Natural killer cell (primary cell): ENCODE measurements at regions of chr6 and their contacts with region 1.

Region 1: GRCh38 chr6:14210663-14211561 is 93.3 kb downstream of the CD83 start:
- DNase-seq: peak; percentile 94
- ATAC-seq: peak; percentile 93 to 97 (median 93)
- H3K4me3 ChIP-seq: peak overlapping the region; percentile 89
- H3K4me3 Mint-ChIP-seq: peak overlapping the region; percentile 88
- H3K27ac ChIP-seq: peak overlapping the region; percentile 83
- H3K27ac Mint-ChIP-seq: peak overlapping the region; percentile 62 to 86
- H3K4me1 ChIP-seq: peaks cover 22% of the 10 kb centered on the region
- H3K4me1 Mint-ChIP-seq: peaks cover 9 to 18% of the 10 kb centered on the region in 2 donors
- H3K27me3 ChIP-seq: no peaks in the 10 kb centered on the region
- H3K27me3 Mint-ChIP-seq: no peaks in the 10 kb centered on the region
- CTCF ChIP-seq: peak; percentile 53

Region 2: GRCh38 chr6:15389765-15390723 is 1179.1 kb after region 1 on chr6:
- intact Hi-C with region 1: loop called (anchors 5 kb)
- DNase-seq: peak in 1 of 2 donors; percentile 55
- ATAC-seq: peak; percentile 22 to 68 (median 53)
- H3K4me3 ChIP-seq: no peak overlapping the region
- H3K4me3 Mint-ChIP-seq: no peak overlapping the region
- H3K27ac ChIP-seq: no peak overlapping the region
- H3K27ac Mint-ChIP-seq: peak overlapping the region; percentile 47 to 62
- H3K4me1 ChIP-seq: peaks cover 35% of the 10 kb centered on the region
- H3K4me1 Mint-ChIP-seq: peaks cover 82 to 90% of the 10 kb centered on the region in 2 donors
- H3K27me3 ChIP-seq: no peaks in the 10 kb centered on the region
- H3K27me3 Mint-ChIP-seq: no peaks in the 10 kb centered on the region
- CTCF ChIP-seq: peak; percentile 58

Region 3: GRCh38 chr6:15441215-15441868 is 1230.4 kb after region 1 on chr6:
- intact Hi-C with region 1: loop called (anchors 10 kb)
- DNase-seq: peak in 1 of 2 donors; percentile 75
- ATAC-seq: peak; percentile 49 to 72 (median 60)
- H3K4me3 ChIP-seq: no peak overlapping the region
- H3K4me3 Mint-ChIP-seq: no peak overlapping the region
- H3K27ac ChIP-seq: no peak overlapping the region
- H3K27ac Mint-ChIP-seq: peak overlapping the region; percentile 68 to 88
- H3K4me1 ChIP-seq: peaks cover 39% of the 10 kb centered on the region
- H3K4me1 Mint-ChIP-seq: peaks cover 85 to 87% of the 10 kb centered on the region in 2 donors
- H3K27me3 ChIP-seq: no peaks in the 10 kb centered on the region
- H3K27me3 Mint-ChIP-seq: no peaks in the 10 kb centered on the region
- CTCF ChIP-seq: peak; percentile 81

Region 4: DNA sequence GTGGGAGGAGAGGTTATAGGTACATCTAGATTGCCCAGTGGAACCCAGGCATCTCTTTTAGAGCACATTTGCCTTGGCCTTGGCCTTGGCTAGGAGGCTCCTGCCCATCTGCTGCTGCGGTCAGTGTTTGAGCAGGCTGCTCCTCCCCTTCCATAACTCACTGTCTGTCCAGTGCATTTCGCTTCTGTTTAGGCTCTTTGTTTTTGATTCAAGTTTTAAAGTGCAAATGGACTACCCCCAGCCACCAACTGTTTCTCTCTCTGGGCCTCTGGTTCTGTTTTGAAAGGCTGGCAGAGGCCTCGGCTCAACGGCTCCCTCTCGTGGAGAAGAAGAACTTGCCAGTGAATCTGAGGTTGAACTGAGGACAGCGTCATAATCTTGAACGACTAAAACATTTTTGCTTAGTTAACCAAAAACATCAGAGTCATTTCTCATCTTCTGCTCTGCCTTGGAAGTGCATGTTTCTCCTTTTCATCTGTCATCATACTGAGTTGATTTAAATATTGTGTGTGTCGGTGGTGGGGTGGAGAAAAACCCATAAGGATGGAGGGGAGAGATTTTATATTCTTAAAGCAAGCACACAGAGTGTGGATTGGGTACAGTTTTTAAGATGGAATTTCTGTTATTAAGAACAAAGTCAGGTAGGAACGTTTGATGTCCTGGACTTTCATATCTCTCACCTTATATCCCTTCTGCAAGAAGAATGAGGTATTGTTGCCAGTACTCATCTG is 1280.5 kb after region 1 on chr6:
- intact Hi-C with region 1: loop called (anchors 1 kb)
- DNase-seq: peak; percentile 58 to 80
- ATAC-seq: peak; percentile 83 to 94 (median 84)
- H3K4me3 ChIP-seq: no peak overlapping the region
- H3K4me3 Mint-ChIP-seq: no peak overlapping the region
- H3K27ac ChIP-seq: no peak overlapping the region
- H3K27ac Mint-ChIP-seq: peak overlapping the region; percentile 53 to 75
- H3K4me1 ChIP-seq: peaks cover 18% of the 10 kb centered on the region
- H3K4me1 Mint-ChIP-seq: peaks cover 49 to 59% of the 10 kb centered on the region in 2 donors
- H3K27me3 ChIP-seq: no peaks in the 10 kb centered on the region
- H3K27me3 Mint-ChIP-seq: no peaks in the 10 kb centered on the region
- CTCF ChIP-seq: peak; percentile 83

Region 5: DNA sequence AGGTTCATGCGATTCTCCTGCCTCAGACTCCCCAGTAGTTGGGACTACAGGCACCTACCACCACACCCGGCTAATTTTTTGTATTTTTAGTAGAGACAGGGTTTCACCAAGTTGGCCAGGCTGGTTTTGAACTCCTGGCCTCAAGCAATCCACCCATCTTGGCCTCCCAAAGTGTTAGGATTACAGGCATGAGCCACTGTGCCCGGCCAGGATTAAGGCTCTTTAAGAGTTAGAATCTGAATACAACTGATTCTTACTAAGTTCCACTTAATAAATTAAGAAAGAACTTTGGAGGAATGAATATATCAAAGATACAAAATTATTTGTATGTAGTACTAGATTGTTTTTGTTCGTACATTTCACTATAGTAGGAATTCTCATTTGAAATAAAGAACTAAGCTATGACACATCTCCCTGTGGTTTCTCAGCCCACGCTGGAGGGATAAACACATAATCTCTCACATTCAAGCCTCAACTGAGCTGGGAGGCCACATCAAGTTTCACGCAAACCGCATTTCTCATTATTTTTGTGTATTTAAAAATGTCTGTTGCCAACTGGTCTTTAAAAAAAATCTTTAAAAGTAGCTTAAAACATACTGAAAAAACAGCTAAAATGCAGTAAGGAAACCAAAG is 1417.7 kb after region 1 on chr6:
- intact Hi-C with region 1: loop called (anchors 2 kb)
- DNase-seq: peak; percentile 56 to 61
- ATAC-seq: peak; percentile 82 to 98 (median 86)
- H3K4me3 ChIP-seq: no peak overlapping the region
- H3K4me3 Mint-ChIP-seq: peak overlapping the region; percentile 78
- H3K27ac ChIP-seq: peak overlapping the region; percentile 71
- H3K27ac Mint-ChIP-seq: peak overlapping the region; percentile 62 to 89
- H3K4me1 ChIP-seq: peaks cover 11% of the 10 kb centered on the region
- H3K4me1 Mint-ChIP-seq: peaks cover 33 to 67% of the 10 kb centered on the region in 2 donors
- H3K27me3 ChIP-seq: no peaks in the 10 kb centered on the region
- H3K27me3 Mint-ChIP-seq: no peaks in the 10 kb centered on the region
- CTCF ChIP-seq: no peak